H1 (cell line): ENCODE measurements at regions of chr7 and their contacts with region 1.

Region 1: DNA sequence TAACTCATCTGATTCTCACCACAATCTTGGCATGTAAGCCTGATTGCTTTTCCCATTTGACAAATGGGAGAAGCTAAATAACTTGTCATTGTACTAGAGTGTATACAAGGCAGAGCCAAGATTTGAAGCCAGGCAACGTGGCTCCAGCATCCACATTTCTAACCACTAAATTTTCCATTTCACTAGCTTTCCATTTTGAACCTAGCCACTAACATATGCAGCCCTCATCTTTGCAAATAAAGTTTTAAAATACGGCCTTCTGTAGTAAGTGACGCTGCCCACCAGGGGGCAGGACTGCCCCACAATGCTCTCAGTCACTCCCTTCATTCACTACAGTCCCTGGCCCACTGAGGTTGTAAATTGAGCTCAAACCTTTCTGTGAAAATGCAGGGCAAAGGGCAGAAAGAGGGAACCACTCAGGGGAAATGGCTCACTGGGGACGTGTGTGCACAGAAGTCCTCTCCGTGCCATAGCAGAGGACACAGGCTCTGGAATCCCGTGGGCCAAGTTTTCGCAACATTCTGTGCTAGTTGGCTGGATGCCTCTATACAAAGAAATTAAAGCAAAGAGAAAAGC is 315.7 kb downstream of the TNS3 start:
- DNase-seq: peak; percentile 36 to 82
- H3K4me3 ChIP-seq: no peak overlapping the region
- H3K27ac ChIP-seq: no peak overlapping the region
- H3K4me1 ChIP-seq: no peaks in the 10 kb centered on the region
- H3K27me3 ChIP-seq: no peaks in the 10 kb centered on the region
- CTCF ChIP-seq: peak; percentile 82 to 88 (median 84)
- EP300 ChIP-seq: no peak
- POLR2A ChIP-seq: no peak
- RAD21 ChIP-seq: peak; percentile 97 to 98

Region 2: GRCh38 chr7:47283507-47284131 is 17.4 kb after region 1 on chr7:
- CTCF ChIA-PET with region 1: interaction called, 41 read pairs
- POLR2A ChIA-PET with region 1: interaction called, 3 read pairs
- DNase-seq: no peak
- H3K4me3 ChIP-seq: no peak overlapping the region
- H3K27ac ChIP-seq: no peak overlapping the region
- H3K4me1 ChIP-seq: no peaks in the 10 kb centered on the region
- H3K27me3 ChIP-seq: no peaks in the 10 kb centered on the region
- CTCF ChIP-seq: no peak
- EP300 ChIP-seq: no peak
- POLR2A ChIP-seq: no peak
- RAD21 ChIP-seq: no peak

Region 3: GRCh38 chr7:47301105-47301477 is 34.9 kb after region 1 on chr7:
- CTCF ChIA-PET with region 1: interaction called, 19 read pairs
- POLR2A ChIA-PET with region 1: no interaction called
- DNase-seq: peak in 1 of 2 experiments; percentile 62
- H3K4me3 ChIP-seq: no peak overlapping the region
- H3K27ac ChIP-seq: no peak overlapping the region
- H3K4me1 ChIP-seq: peaks cover 0 to 8% (median 2%) of the 10 kb centered on the region in 4 experiments; a peak in 3 of 7 replicates
- H3K27me3 ChIP-seq: no peaks in the 10 kb centered on the region
- CTCF ChIP-seq: peak; percentile 61 to 75 (median 68)
- EP300 ChIP-seq: no peak
- POLR2A ChIP-seq: no peak
- RAD21 ChIP-seq: peak; percentile 84 to 86

Region 4: GRCh38 chr7:47354831-47355541 is 88.8 kb after region 1 on chr7:
- CTCF ChIA-PET with region 1: interaction called, 15 read pairs
- POLR2A ChIA-PET with region 1: no interaction called
- DNase-seq: no peak
- H3K4me3 ChIP-seq: no peak overlapping the region
- H3K27ac ChIP-seq: no peak overlapping the region
- H3K4me1 ChIP-seq: peaks cover 0 to 2% (median under 1%) of the 10 kb centered on the region in 4 experiments; a peak in 4 of 7 replicates
- H3K27me3 ChIP-seq: no peaks in the 10 kb centered on the region
- CTCF ChIP-seq: no peak
- EP300 ChIP-seq: no peak
- POLR2A ChIP-seq: no peak
- RAD21 ChIP-seq: no peak

Region 5: DNA sequence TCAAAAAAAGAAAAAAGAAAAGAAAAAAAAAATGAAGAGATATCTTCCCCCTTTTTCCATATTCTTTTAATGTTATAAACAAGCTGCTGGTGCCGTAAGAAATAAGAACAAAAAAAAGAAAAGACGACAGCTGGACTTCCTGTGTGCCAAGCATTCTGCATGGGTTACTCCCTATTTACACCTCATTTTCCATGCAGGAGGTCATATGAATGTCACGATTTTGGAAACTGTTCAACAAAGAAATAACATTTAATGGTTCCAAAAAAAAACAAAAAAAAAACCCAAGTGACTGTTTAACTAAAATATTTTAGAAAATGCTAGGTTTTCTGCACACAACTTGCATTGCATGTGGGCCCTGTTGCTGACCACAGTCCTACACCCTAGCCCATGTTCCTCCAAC is 156.4 kb after region 1 on chr7:
- CTCF ChIA-PET with region 1: interaction called, 12 read pairs
- POLR2A ChIA-PET with region 1: no interaction called
- DNase-seq: no peak
- H3K4me3 ChIP-seq: no peak overlapping the region
- H3K27ac ChIP-seq: no peak overlapping the region
- H3K4me1 ChIP-seq: no peaks in the 10 kb centered on the region
- H3K27me3 ChIP-seq: no peaks in the 10 kb centered on the region
- CTCF ChIP-seq: no peak
- EP300 ChIP-seq: no peak
- POLR2A ChIP-seq: no peak
- RAD21 ChIP-seq: no peak

Region 6: GRCh38 chr7:47818796-47819606 is 552.8 kb after region 1 on chr7:
- CTCF ChIA-PET with region 1: interaction called, 16 read pairs
- POLR2A ChIA-PET with region 1: no interaction called
- DNase-seq: peak in 1 of 2 experiments; percentile 73
- H3K4me3 ChIP-seq: no peak overlapping the region
- H3K27ac ChIP-seq: no peak overlapping the region
- H3K4me1 ChIP-seq: peaks cover 0 to 5% (median 2%) of the 10 kb centered on the region in 4 experiments; a peak in 2 of 7 replicates
- H3K27me3 ChIP-seq: no peaks in the 10 kb centered on the region
- CTCF ChIP-seq: peak; percentile 69 to 97 (median 81)
- EP300 ChIP-seq: no peak
- POLR2A ChIP-seq: no peak
- RAD21 ChIP-seq: peak; percentile 92 to 93